Activated CD4-positive, alpha-beta memory T cell treated with anti-CD3 and anti-CD28 coated beads, Interleukin-2, amount 10 ng/mL, durations not matched to agents 7 days and 5 days (primary cell): ENCODE measurements at regions of chr17 and their contacts with region 1.

Region 1: DNA sequence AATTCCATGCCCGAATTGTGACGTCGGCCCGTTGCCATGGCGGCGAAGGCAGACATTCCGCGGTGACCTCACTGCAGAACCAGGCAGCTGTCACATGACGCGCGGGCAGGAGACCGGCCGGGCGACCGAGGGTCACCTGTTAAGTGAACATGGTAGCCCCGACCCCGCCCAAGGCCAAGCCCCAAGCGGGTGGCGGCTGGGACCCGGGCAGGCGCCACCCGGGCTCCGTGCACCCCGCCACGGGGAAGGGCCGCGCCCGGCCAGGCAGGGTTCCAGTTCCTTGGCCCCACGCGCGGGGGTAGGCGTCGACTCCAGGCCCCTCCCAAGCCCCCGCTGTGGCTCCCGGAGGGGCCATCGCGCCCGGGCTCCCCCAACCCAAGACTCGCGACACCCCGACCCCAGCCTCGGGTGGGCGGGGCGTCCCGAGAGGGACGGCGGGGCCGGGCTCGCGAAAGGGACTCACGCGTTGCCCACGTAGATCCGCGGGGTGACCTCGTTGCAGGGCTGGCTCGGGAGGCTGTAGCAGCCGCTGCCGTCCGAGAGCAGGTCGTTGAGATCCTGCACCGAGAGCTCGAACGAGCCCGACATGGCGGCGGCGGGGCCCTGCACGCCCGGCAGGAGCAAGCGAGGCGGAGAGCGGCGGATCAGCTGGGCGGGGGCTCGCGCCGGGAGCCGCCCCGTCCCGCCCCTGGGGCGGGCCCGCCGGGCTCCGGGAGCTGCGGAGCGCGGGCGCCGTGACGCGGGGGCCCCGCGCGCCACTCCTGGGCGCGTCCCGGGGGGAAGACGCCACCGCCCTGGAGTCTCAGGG is at the start of gene DUSP3:
- DNase-seq: peak; percentile 77
- H3K4me3 Mint-ChIP-seq: peak within 1 kb of the TSS; percentile 79
- H3K27ac Mint-ChIP-seq: peak within 1 kb of the TSS; percentile 64
- H3K4me1 Mint-ChIP-seq: peaks cover 6% of the 10 kb centered on the region
- H3K27me3 Mint-ChIP-seq: peaks cover 40% of the 10 kb centered on the region
- total RNA-seq, gene DUSP3: 8.3 to 8.6 TPM

Region 2: DNA sequence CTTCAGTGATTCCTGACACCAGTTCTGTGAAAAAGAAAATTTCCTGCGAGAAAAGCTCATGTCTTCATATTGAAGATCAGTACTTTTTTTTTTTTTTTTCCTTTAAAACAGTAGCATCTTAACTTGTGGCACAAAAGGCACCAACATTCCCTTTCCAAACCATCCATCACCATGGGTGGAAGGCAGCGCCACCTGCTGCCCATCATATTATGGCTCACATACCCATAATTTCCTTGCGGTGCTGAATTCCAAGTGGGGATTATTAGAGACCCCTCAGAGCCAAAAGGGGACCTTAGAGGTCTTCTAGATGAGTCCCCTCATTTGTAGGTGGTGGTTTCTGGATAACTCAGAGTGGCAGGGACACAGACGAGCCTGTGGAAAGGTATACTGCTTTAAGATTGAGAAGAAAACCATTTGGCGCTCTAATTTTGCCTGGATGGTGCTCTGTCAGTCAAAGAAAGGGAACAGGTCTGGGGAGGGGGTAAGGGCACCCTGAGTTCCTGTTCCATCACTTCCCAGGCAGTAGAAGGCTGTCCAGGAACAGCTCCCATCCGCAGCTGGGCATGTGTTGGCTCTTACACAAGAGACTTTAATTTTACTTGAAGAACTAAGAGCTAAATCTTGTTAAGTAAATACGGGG is 12.0 kb before region 1 on chr17:
- CTCF ChIA-PET with region 1: interaction called, 26 read pairs
- POLR2A ChIA-PET with region 1: no interaction called
- DNase-seq: peak; percentile 52
- H3K4me3 Mint-ChIP-seq: no peak overlapping the region
- H3K27ac Mint-ChIP-seq: no peak overlapping the region
- H3K4me1 Mint-ChIP-seq: no peaks in the 10 kb centered on the region
- H3K27me3 Mint-ChIP-seq: peaks cover 8% of the 10 kb centered on the region